ENCODE measurements at regions of chr1 and their contacts with region 1.

Region 1: GRCh38 chr1:160460683-160461287 is 60.4 kb downstream of the VANGL2 start:
- DNase-seq: no peak
- H3K4me3 ChIP-seq: no peak overlapping the region
- H3K27ac ChIP-seq: no peak overlapping the region
- H3K4me1 ChIP-seq: no peaks in the 10 kb centered on the region
- H3K27me3 ChIP-seq: peaks cover 33% of the 10 kb centered on the region; the same call in 1 of the 2 replicates
- CTCF ChIP-seq: no peak

Region 2: GRCh38 chr1:160437432-160438316 is 23.1 kb before region 1 on chr1:
- CTCF ChIA-PET with region 1: no interaction called
- POLR2A ChIA-PET with region 1: interaction called, 27 read pairs
- intact Hi-C with region 1: no loop called
- DNase-seq: no peak
- H3K4me3 ChIP-seq: no peak overlapping the region
- H3K27ac ChIP-seq: no peak overlapping the region
- H3K4me1 ChIP-seq: no peaks in the 10 kb centered on the region
- H3K27me3 ChIP-seq: peaks cover 21% of the 10 kb centered on the region
- CTCF ChIP-seq: no peak

Region 3: DNA sequence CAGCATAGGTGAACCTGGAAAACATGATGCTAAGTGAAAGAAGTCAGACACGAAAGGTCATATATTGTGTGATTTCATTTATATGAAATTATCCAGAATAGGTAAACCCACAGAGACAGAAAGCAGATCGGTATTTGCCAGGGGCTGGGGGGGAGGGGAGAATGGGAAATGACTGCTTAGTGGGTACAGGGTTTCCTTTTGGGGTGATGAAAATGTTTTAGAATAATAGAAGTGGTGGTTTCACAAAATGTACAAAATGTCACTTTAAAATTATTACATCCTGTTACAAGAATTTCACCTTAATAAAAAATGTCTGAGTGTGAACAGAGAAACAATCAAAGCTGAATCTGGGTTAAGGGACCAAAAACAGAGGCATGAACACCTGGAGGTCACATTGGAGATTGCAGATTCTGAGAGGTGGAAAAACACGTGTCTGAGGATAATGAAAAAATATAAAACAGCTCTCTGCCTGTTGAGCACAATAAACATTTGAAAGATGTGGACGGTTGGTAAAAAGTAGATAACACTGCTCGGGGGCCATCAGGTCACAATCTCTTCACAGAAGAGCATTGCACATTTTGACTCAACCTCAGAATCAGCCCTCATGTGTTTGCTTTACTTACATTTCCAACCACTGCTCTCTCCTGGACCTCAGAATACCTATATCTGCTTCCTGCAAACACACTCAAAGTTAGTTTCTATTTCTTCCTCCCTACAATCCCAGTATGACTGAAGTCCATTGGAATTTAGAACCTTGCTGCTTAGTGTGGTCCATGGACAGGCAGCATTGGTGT is 59.1 kb after region 1 on chr1:
- CTCF ChIA-PET with region 1: no interaction called
- POLR2A ChIA-PET with region 1: interaction called, 4 read pairs
- intact Hi-C with region 1: loop called (anchors 10 kb)
- DNase-seq: no peak
- H3K4me3 ChIP-seq: no peak overlapping the region
- H3K27ac ChIP-seq: no peak overlapping the region
- H3K4me1 ChIP-seq: no peaks in the 10 kb centered on the region
- H3K27me3 ChIP-seq: peaks cover 3% of the 10 kb centered on the region; the same call in 1 of the 2 replicates
- CTCF ChIP-seq: no peak

Measured in PC-9 (cell line).